ENCODE measurements at regions of chr3 and their contacts with region 1.

Region 1: GRCh38 chr3:193572426-193572908 is 17.8 kb upstream of the ATP13A4 start:
- DNase-seq: peak; percentile 89
- H3K4me3 ChIP-seq: no peak overlapping the region
- H3K27ac ChIP-seq: no peak overlapping the region
- H3K4me1 ChIP-seq: no peaks in the 10 kb centered on the region
- H3K27me3 ChIP-seq: no peaks in the 10 kb centered on the region
- CTCF ChIP-seq: peak; percentile 62 to 78 (median 67)
- EP300 ChIP-seq: no peak
- POLR2A ChIP-seq: no peak

Region 2: DNA sequence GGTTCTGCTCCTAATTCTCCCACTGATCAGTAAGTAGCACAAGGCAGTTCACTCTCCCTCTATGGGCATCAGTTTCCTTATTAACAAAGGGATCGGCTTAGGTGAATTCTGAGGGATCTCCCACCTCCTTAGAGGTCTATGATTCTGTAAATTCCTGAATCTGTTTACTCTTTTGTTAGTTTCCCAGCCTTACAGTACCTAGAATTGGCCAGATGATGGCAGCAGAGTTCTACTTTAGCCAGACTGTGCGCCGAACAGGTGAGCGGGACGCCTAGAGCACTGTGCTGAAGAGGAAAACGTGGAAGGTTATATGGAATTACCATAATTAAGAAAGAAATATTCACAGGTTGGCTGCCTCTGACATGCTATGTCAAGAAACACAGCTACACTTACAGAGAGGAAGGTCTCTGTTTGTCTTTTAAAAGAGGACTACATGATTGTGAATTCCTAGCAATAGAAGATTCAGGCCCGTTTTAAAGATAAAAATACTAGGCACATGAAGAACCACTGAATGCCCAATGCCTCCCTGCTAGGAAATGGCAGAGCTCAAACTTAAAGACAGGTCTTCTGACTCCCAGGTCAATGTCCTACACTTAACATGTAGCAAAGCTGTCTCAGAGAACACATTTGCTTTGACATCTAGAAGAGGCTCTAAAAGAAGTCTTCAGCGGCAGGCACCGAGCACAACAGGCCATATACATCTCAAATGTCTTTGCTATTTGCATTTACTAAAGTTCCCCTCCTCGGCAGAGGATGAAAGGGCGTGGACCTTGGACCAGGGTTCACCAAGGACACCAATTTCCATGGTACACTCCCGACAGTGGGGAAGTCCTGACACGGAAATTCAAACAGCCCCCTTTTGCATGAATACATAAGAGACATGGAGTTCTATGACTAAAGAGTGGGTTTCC is 1105.0 kb before region 1 on chr3:
- intact Hi-C with region 1: loop called (anchors 10 kb)
- DNase-seq: no peak
- H3K4me3 ChIP-seq: no peak overlapping the region
- H3K27ac ChIP-seq: no peak overlapping the region
- H3K4me1 ChIP-seq: peaks cover 0 to 5% (median 2%) of the 10 kb centered on the region in 4 donors
- H3K27me3 ChIP-seq: peaks cover 0 to 6% (median 0%) of the 10 kb centered on the region in 4 donors
- CTCF ChIP-seq: peak; percentile 80 to 94 (median 91)
- EP300 ChIP-seq: no peak
- POLR2A ChIP-seq: no peak

Region 3: DNA sequence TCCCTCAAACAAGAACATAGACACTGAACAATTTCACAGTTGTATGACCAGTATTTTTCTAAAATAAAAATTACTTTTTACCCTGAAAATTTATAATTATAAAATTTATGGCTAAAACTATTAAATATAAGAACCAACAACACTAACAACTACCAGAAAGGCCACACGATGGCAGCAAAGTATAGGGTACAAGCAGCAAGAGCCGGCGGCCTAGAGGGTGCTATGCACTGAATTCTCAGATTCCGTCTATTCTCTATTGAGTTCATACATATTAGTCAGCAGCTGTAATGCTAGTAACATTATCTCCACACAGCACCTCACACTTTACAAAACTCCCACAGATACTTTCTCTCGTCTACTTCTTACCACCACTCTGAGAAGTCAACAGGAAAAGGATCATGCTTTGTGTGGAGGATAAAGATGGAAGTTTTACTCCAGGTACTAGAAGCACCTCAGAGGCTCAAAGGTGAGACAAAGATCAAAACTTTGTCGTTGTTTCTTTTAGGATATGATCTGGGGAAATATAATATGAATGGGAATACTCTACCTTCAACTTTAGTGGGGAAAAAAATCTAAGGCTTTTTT is 1005.7 kb before region 1 on chr3:
- intact Hi-C with region 1: loop called (anchors 5 kb)
- DNase-seq: no peak
- H3K4me3 ChIP-seq: no peak overlapping the region
- H3K27ac ChIP-seq: no peak overlapping the region
- H3K4me1 ChIP-seq: peaks cover 0 to 8% (median 1%) of the 10 kb centered on the region in 4 donors
- H3K27me3 ChIP-seq: no peaks in the 10 kb centered on the region
- CTCF ChIP-seq: peak; percentile 66 to 74 (median 73)
- EP300 ChIP-seq: no peak
- POLR2A ChIP-seq: no peak

Region 4: DNA sequence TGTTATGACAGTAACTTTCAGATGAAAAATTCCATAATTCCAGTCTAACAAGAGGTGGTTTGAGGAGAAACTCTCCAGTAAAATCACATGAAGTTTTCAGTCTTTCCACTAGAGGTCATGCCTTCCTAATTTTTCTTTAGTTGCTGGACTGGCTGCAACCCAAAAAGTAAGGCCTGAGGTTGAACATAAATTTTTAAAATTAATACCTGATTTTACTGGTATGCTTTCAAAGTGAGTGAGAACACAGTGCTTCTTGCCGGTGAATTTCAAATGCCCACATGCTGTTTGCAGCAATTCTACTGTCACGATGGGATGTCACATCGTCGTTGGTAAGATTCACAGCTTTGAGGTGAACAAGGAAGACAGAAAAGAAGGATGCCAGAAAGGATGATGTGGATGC is 756.1 kb before region 1 on chr3:
- intact Hi-C with region 1: loop called (anchors 5 kb)
- DNase-seq: no peak
- H3K4me3 ChIP-seq: no peak overlapping the region
- H3K27ac ChIP-seq: no peak overlapping the region
- H3K4me1 ChIP-seq: peaks cover 7 to 29% (median 18%) of the 10 kb centered on the region in 4 donors
- H3K27me3 ChIP-seq: no peaks in the 10 kb centered on the region
- CTCF ChIP-seq: peak; percentile 71 to 74 (median 73)
- EP300 ChIP-seq: no peak
- POLR2A ChIP-seq: no peak

Region 5: DNA sequence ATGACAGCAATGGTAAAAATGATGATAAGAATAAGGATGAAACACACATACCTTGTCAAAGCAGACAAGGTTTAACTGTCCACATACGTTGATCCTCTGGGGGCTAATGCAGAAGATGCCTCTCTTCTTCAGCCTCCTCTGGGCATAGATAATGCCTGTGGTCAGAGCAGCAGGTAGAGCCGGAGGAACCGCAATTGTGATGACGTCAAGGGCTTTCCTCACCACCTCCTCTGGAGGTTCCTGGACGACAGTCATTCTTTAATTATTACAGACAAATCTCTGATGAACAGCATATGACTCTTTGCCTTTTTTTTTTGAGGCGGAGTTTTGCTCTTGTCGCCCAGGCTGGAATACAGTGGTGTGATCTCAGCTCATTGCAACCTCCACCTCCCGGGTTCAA is 107.6 kb before region 1 on chr3:
- intact Hi-C with region 1: loop called (anchors 5 kb)
- DNase-seq: no peak
- H3K4me3 ChIP-seq: no peak overlapping the region
- H3K27ac ChIP-seq: no peak overlapping the region
- H3K4me1 ChIP-seq: peaks cover 0 to 7% (median 0%) of the 10 kb centered on the region in 4 donors
- H3K27me3 ChIP-seq: no peaks in the 10 kb centered on the region
- CTCF ChIP-seq: no peak
- EP300 ChIP-seq: no peak
- POLR2A ChIP-seq: no peak